A673 (cell line): ENCODE measurements at regions of chr13 and their contacts with region 1.

Region 1: DNA sequence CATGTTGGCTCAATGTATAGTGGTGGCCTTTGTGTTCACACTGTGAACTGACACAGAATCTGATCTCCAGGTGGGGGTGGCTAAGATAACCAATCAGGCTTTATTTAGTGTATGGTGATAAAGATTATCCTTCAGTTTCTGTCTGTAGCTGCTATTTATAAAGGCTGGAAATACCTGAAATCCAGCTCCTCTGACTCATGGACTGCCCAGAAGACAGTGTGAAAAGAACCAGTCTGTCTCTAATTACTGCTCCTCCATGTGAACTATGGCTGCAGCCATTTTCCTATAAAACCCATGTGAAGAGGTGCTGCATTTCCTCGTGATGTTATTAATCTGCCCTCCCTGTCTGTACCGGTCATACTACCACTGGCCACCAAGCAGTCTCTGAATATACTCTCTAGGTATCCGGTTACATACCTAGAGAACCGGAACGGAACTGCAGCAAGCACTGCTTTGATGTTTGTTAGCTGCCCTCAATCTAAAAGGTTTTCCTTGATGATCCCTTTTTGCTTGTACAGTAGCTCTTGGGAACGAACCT is 238.0 kb downstream of the LHFPL6 start:
- DNase-seq: no peak
- H3K4me3 ChIP-seq: no peak overlapping the region
- H3K27ac ChIP-seq: peak overlapping the region; percentile 92
- H3K4me1 ChIP-seq: peaks cover 72% of the 10 kb centered on the region
- H3K27me3 ChIP-seq: no peaks in the 10 kb centered on the region
- CTCF ChIP-seq: no peak

Region 2: DNA sequence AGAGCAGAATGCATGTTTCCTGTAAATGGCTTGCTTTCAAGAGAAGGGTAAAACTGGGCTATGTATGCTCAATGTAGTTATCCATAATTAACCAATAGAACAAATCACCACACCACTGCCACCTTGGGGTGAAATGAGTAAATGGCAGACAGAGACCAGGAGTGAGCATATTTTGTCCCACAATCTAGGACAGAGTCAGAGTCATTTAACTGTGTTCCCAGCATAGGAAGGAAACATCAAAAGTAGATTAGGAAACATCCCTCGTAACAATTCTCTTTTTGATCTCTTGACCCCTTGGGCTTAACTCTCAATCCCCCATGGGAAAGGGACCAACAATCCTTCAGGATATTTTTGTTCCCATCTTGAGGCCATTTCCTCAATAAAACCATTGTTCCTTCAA is 102.0 kb before region 1 on chr13:
- CTCF ChIA-PET with region 1: no interaction called
- POLR2A ChIA-PET with region 1: no interaction called
- intact Hi-C with region 1: loop called (anchors 10 kb)
- DNase-seq: peak; percentile 78
- H3K4me3 ChIP-seq: no peak overlapping the region
- H3K27ac ChIP-seq: no peak overlapping the region
- H3K4me1 ChIP-seq: peaks cover 21% of the 10 kb centered on the region
- H3K27me3 ChIP-seq: no peaks in the 10 kb centered on the region
- CTCF ChIP-seq: peak; percentile 84

Region 3: DNA sequence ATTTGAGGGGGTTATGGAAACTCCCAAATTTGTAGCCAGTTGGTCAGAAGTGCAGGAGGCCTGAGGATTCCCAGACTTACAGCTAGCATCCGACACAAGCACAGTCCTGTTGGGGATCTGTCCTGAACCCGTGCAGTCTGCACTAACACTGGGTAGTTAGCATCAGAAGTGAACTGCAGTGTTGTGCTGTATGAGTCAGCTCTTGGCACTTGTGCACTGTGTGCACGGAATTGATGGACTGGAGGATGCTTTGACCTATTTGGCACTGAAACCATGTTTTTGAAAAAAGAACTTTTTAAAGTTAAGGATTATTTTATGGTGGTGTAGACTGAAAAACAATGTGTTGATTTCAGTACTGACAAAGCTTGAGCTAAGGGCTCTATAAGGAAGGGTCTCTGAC is 47.7 kb before region 1 on chr13:
- CTCF ChIA-PET with region 1: no interaction called
- POLR2A ChIA-PET with region 1: no interaction called
- intact Hi-C with region 1: no loop called
- DNase-seq: no peak
- H3K4me3 ChIP-seq: no peak overlapping the region
- H3K27ac ChIP-seq: no peak overlapping the region
- H3K4me1 ChIP-seq: peaks cover 6% of the 10 kb centered on the region
- H3K27me3 ChIP-seq: no peaks in the 10 kb centered on the region
- CTCF ChIP-seq: no peak

Region 4: GRCh38 chr13:39527961-39528660 is 163.1 kb after region 1 on chr13:
- CTCF ChIA-PET with region 1: no interaction called
- POLR2A ChIA-PET with region 1: no interaction called
- intact Hi-C with region 1: no loop called
- DNase-seq: peak; percentile 60
- H3K4me3 ChIP-seq: no peak overlapping the region
- H3K27ac ChIP-seq: no peak overlapping the region
- H3K4me1 ChIP-seq: peaks cover 21% of the 10 kb centered on the region
- H3K27me3 ChIP-seq: no peaks in the 10 kb centered on the region
- CTCF ChIP-seq: no peak

Region 5: DNA sequence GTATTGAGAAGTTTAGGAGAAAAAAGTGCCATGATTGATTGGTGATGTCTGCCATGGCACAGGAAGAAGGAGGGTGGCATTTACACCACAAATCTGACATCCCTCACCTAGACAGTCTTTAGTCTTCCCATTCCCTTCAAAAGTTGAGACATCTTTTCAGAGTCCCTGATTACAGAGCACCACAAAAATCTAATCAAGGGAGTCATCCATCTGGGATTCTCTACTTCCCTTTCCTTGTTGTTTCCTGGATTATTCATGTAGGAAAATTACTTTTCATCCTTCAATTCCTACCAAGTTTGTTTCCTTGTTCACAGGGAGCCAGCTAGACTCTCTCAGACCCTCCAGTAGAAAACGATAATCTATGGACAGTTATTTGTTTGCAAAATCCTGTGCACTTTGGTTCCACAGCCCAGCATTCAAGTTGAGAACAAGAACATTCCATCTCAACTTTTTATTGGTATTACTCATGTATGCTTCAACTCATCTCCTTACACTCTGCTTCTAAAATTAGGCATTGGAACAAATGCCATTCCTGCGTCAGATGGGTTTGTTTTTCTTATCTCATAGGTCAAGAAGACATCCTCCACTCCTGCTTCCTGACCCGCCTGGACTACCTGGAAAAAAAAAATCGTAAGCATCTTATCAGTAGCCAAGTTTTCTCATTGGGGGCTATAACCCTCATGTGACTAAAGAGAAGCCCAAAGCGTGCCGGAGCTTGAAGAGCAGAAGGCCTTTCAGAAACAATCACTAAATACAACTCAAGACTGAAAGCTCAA is 1041.6 kb after region 1 on chr13:
- CTCF ChIA-PET with region 1: no interaction called
- POLR2A ChIA-PET with region 1: no interaction called
- intact Hi-C with region 1: no loop called
- DNase-seq: no peak
- H3K4me3 ChIP-seq: no peak overlapping the region
- H3K27ac ChIP-seq: no peak overlapping the region
- H3K4me1 ChIP-seq: no peaks in the 10 kb centered on the region
- H3K27me3 ChIP-seq: no peaks in the 10 kb centered on the region
- CTCF ChIP-seq: no peak